ENCODE measurements at regions of chr3 and their contacts with region 1.

Region 1: DNA sequence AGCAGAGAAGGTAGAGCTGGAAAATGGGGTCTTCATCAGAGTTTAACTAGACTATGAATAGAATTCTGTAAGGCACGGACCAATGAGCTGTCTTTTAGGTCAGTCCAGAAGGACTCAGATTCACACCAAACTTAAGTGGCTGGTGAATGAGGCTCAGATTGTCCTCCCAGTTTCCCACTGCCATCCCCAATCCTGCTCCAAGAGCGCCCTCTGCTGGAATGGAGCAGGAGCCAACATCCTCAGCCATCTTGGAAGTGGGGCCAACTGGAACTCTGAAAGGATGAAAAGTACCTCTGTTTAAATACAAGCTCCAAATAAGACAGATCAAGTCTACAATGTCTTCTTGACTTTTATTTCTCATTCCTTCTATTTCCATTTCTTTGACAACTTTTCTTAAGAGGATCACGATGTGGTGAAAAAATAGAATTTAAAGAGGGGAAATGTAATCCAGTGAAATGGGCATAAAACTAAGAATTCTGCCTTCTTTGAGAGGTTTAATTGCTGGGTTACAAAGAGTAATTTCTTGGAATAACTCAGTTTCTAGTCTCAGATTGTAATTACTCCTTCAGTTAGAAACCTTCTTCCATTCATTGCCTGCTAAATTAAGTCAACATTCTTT is 217.1 kb upstream of the TPRG1 start:
- DNase-seq: no peak
- H3K4me3 ChIP-seq: no peak overlapping the region
- CTCF ChIP-seq: peak; percentile 89

Region 2: GRCh38 chr3:188482929-188483328 is 471.8 kb before region 1 on chr3:
- CTCF ChIA-PET with region 1: interaction called, 10 read pairs
- POLR2A ChIA-PET with region 1: no interaction called
- DNase-seq: no peak
- H3K4me3 ChIP-seq: no peak overlapping the region
- CTCF ChIP-seq: no peak

Region 3: DNA sequence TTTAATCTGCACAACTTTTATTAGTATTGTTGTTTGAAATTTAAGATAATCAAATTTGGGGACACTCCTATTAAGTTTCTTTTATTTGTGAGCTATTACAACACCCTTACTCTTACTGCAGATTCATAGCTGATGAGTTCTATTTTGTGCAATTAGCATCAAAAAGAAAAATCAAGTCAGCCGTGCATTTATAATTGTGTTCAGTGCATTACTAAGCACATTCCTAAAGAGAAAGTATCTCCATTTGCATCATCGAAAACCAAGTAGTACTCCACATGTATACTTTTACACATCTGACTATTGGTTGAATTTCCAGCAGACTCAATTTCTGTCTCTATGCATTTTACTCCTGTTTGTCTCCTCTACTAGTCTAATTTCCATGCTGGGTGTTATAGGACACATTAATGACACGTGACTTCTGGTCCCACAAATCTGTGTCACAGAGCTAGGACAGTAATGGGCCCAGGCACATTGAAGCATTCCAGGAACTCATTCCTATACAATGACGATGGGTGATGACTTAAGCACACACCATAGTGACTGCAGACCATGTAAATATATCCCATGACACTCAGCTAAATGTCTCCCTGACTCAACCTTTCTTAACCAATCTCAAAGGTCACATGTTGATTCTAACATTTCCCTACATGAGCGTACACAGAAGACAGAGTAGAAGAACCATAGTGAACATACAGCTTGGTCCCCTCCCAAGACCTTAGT is 323.2 kb before region 1 on chr3:
- CTCF ChIA-PET with region 1: interaction called, 10 read pairs
- POLR2A ChIA-PET with region 1: no interaction called
- DNase-seq: no peak
- H3K4me3 ChIP-seq: no peak overlapping the region
- CTCF ChIP-seq: no peak

Region 4: GRCh38 chr3:188754267-188754666 is 200.4 kb before region 1 on chr3:
- CTCF ChIA-PET with region 1: interaction called, 11 read pairs
- POLR2A ChIA-PET with region 1: no interaction called
- DNase-seq: no peak
- H3K4me3 ChIP-seq: no peak overlapping the region
- CTCF ChIP-seq: no peak

Region 5: GRCh38 chr3:188941103-188941502 is 13.6 kb before region 1 on chr3:
- CTCF ChIA-PET with region 1: interaction called, 30 read pairs
- POLR2A ChIA-PET with region 1: no interaction called
- DNase-seq: no peak
- H3K4me3 ChIP-seq: no peak overlapping the region
- CTCF ChIP-seq: no peak

Region 6: GRCh38 chr3:189108067-189108466 is 153.4 kb after region 1 on chr3:
- CTCF ChIA-PET with region 1: no interaction called
- POLR2A ChIA-PET with region 1: no interaction called
- DNase-seq: peak; percentile 26
- H3K4me3 ChIP-seq: no peak overlapping the region
- CTCF ChIP-seq: no peak

Region 7: GRCh38 chr3:189233225-189233858 is 278.6 kb after region 1 on chr3:
- CTCF ChIA-PET with region 1: interaction called, 10 read pairs
- POLR2A ChIA-PET with region 1: no interaction called
- DNase-seq: peak; percentile 14
- H3K4me3 ChIP-seq: no peak overlapping the region
- CTCF ChIP-seq: peak; percentile 76

Measured in AG04449 (cell line).